Naive thymus-derived CD4-positive, alpha-beta T cell (primary cell): ENCODE measurements at regions of chr11 and their contacts with region 1.

Region 1: DNA sequence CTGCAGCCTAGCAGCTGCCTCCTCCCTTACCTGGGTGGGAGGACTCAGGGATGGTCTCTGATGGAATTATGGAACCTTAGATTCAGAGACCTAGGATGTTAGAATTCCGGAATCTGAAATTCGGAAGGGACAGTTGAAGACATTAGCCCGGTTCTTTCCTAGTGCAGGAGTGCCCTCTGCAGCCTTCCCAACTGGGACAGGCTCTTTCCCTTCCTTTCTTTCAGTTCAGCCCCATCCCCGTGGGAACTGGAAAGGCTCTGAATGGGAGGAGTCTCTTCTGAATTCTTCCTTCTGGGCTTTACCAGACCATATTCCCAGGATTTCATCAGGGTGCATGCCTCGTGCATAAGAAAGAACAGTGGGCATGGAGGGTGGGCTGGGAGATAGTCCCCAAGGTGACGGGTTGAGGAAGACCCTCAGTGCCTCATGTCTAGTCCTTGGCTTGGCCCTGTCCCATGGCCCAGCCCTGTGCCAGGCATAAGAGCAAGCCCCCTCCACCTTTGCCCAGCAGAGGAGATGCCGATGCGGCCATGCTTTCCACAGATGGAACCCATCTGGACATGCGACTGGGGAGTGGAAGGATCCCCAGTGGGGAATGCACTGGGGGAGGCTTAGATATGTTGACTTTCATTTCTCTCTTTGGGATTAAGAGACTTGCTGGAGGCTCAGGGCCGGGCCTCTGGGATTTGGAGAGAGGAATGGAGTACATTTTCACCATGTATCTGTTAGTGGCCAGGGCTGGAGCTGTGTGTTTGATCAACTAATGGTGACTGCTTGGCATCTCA is 14.4 kb downstream of the DNAJB13 start:
- DNase-seq: no peak
- ATAC-seq: no peak
- H3K4me3 ChIP-seq: no peak overlapping the region
- H3K4me3 Mint-ChIP-seq: peak overlapping the region in 5 of 10 donors; percentile 18 to 59 (median 47)
- H3K27ac ChIP-seq: no peak overlapping the region
- H3K27ac Mint-ChIP-seq: peak overlapping the region in 8 of 9 donors; percentile 36 to 86 (median 74)
- H3K4me1 ChIP-seq: peaks cover 41 to 50% of the 10 kb centered on the region in 2 donors
- H3K4me1 Mint-ChIP-seq: peaks cover 29 to 57% (median 44%) of the 10 kb centered on the region in 7 donors
- H3K27me3 ChIP-seq: no peaks in the 10 kb centered on the region
- H3K27me3 Mint-ChIP-seq: no peaks in the 10 kb centered on the region

Region 2: DNA sequence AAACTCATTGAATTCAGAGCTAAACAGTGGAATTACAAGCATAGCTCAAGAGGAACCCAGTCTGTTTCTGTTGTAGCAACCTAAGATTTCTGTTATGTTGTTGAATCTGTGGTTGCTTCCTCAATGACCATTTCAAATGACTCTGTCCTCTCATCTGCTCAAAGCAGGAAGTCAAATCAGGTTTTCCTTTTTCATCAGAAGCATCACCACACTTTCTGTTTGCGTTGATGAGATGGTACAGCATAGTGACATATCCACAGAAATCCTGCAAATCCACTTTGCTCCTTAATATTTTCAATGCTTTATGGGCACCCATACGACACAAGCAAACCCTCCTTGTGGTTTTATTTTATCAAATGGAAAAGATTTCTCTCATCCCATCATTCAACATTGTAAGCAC is 30.0 kb after region 1 on chr11:
- CTCF ChIA-PET with region 1: interaction called, 8 read pairs
- POLR2A ChIA-PET with region 1: interaction called, 1,403 read pairs
- intact Hi-C with region 1: loop called in 1 of 2 experiments (anchors 2 kb)
- DNase-seq: peak in 8 of 9 donors; percentile 16 to 93 (median 90)
- ATAC-seq: peak; percentile 85
- H3K4me3 ChIP-seq: peak overlapping the region; percentile 4
- H3K4me3 Mint-ChIP-seq: peak overlapping the region; percentile 65 to 92 (median 80)
- H3K27ac ChIP-seq: peak overlapping the region; percentile 92
- H3K27ac Mint-ChIP-seq: peak overlapping the region; percentile 93 to 100 (median 97)
- H3K4me1 ChIP-seq: peaks cover 33 to 45% of the 10 kb centered on the region in 2 donors
- H3K4me1 Mint-ChIP-seq: peaks cover 26 to 81% (median 71%) of the 10 kb centered on the region in 7 donors
- H3K27me3 ChIP-seq: no peaks in the 10 kb centered on the region
- H3K27me3 Mint-ChIP-seq: no peaks in the 10 kb centered on the region

Region 3: GRCh38 chr11:74011360-74012073 is 46.2 kb after region 1 on chr11:
- CTCF ChIA-PET with region 1: interaction called, 13 read pairs
- POLR2A ChIA-PET with region 1: interaction called, 1,403 read pairs
- intact Hi-C with region 1: loop called in 1 of 2 experiments (anchors 1 kb)
- DNase-seq: peak in 8 of 9 donors; percentile 16 to 67 (median 46)
- ATAC-seq: peak; percentile 84
- H3K4me3 ChIP-seq: no peak overlapping the region
- H3K4me3 Mint-ChIP-seq: peak overlapping the region; percentile 55 to 81 (median 66)
- H3K27ac ChIP-seq: peak overlapping the region; percentile 61
- H3K27ac Mint-ChIP-seq: peak overlapping the region; percentile 80 to 98 (median 94)
- H3K4me1 ChIP-seq: peaks cover 83 to 95% of the 10 kb centered on the region in 2 donors
- H3K4me1 Mint-ChIP-seq: peaks cover 46 to 99% (median 87%) of the 10 kb centered on the region in 7 donors
- H3K27me3 ChIP-seq: no peaks in the 10 kb centered on the region
- H3K27me3 Mint-ChIP-seq: no peaks in the 10 kb centered on the region

Region 4: DNA sequence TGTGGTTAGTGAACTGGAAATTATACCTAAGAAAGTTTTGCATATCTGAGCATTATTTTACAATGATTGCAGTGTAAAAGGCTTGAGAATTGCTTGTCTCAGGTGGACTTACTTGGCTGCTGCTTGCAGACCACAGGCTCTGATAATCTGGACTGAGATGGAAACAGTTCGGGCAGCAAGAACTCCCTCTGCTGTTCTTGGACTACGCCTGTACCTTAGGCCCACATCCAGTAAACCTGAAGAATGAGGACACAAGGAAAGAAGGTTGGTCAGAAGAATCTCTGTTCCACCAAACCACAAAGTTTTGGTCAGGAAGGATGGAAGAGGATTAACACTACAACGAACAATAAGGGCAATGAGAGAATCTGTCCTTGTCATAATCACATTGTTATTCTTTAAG is 125.4 kb after region 1 on chr11:
- CTCF ChIA-PET with region 1: interaction called, 3 read pairs
- POLR2A ChIA-PET with region 1: no interaction called
- intact Hi-C with region 1: loop called (anchors 1 kb)
- DNase-seq: peak in 1 of 9 donors; percentile 4
- ATAC-seq: no peak
- H3K4me3 ChIP-seq: no peak overlapping the region
- H3K4me3 Mint-ChIP-seq: no peak overlapping the region
- H3K27ac ChIP-seq: no peak overlapping the region
- H3K27ac Mint-ChIP-seq: no peak overlapping the region
- H3K4me1 ChIP-seq: no peaks in the 10 kb centered on the region
- H3K4me1 Mint-ChIP-seq: peaks cover 0 to 3% (median 0%) of the 10 kb centered on the region in 7 donors
- H3K27me3 ChIP-seq: no peaks in the 10 kb centered on the region
- H3K27me3 Mint-ChIP-seq: no peaks in the 10 kb centered on the region

Region 5: DNA sequence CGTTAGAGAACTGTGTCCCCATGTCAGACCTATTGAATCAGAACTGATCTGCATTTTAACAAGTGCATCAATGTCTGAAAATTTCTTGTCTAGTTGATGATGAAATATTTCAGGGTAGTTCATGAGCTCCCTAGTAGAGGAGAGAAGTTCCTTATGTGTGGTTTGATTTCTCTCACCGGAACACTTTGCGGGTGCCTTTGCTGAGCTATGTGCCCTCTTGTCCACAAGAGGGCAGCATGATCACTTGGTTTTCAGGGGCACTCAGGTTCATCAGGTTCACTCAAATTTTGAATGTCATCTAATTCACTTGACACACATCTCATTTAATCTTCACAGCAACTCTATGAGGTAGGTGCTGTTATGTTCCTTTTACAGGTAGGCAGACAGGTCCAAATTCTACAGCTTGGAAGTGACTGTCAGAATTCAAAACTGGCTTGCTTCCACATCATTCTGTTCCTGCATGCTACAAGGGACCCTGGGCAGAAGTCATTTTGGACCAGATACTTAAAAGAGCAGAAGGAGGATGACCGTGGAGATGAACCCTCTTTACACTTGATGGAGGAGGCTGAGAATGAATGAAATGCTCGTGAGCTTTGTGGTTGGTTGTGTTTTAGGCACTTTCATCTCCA is 290.6 kb after region 1 on chr11:
- CTCF ChIA-PET with region 1: interaction called, 4 read pairs
- POLR2A ChIA-PET with region 1: no interaction called
- intact Hi-C with region 1: loop called (anchors 2 kb)
- DNase-seq: peak in 8 of 9 donors; percentile 21 to 72 (median 62)
- ATAC-seq: peak; percentile 90
- H3K4me3 ChIP-seq: no peak overlapping the region
- H3K4me3 Mint-ChIP-seq: no peak overlapping the region
- H3K27ac ChIP-seq: no peak overlapping the region
- H3K27ac Mint-ChIP-seq: peak overlapping the region in 5 of 9 donors; percentile 4 to 68 (median 12)
- H3K4me1 ChIP-seq: peaks cover 0 to 6% of the 10 kb centered on the region in 2 donors
- H3K4me1 Mint-ChIP-seq: peaks cover 0 to 12% (median 5%) of the 10 kb centered on the region in 7 donors
- H3K27me3 ChIP-seq: no peaks in the 10 kb centered on the region
- H3K27me3 Mint-ChIP-seq: no peaks in the 10 kb centered on the region

Region 6: GRCh38 chr11:74449369-74449931 is 484.2 kb after region 1 on chr11:
- CTCF ChIA-PET with region 1: no interaction called
- POLR2A ChIA-PET with region 1: no interaction called
- intact Hi-C with region 1: loop called in 1 of 2 experiments (anchors 1 kb)
- DNase-seq: peak in 7 of 9 donors; percentile 56 to 77 (median 67)
- ATAC-seq: peak; percentile 92
- H3K4me3 ChIP-seq: no peak overlapping the region
- H3K4me3 Mint-ChIP-seq: no peak overlapping the region
- H3K27ac ChIP-seq: no peak overlapping the region
- H3K27ac Mint-ChIP-seq: peak overlapping the region in 1 of 9 donors; percentile 56
- H3K4me1 ChIP-seq: no peaks in the 10 kb centered on the region
- H3K4me1 Mint-ChIP-seq: peaks cover 0 to 6% (median 5%) of the 10 kb centered on the region in 7 donors
- H3K27me3 ChIP-seq: no peaks in the 10 kb centered on the region
- H3K27me3 Mint-ChIP-seq: peaks cover 0 to 10% (median 7%) of the 10 kb centered on the region in 5 donors